ENCODE measurements at regions of chr3 and their contacts with region 1.

Region 1: DNA sequence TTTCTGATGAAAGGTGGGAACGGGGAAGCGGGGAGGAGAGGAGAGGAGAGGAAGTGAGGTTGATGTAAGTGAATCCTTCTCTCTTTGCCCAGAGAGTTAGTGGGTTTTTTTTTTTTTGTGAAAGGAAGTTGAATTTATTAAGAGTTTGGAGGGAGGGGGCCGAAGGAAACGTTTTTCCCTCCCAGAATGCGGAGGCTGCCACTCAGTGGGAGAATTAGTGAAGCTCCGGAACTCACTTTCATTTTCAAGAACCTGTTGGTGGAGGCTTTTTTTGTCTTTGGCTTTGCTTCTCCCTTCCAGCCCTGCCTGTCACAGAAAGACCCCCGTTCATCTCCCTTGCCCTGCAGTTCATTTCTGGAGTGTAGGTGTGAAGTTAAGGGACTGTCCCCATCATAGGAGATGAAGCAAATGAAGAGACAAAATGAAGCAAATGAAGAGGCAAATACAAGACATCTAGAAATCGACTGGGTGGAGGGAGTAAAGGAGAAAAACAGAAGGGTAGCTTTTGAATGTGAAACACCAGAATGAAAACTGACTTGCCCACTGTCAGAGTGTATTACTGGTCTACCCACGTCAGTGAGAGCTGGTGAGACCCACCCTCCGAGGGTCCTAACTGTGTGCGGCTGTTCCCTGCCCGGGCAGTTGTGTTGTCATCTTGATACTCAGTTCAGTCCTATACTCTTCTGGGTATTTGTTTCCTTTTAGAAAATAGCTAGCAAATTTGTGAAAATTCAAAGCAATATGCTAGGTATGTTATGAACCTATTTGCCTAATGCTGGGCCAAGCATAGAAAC is 91.5 kb downstream of the ITPR1 start:
- DNase-seq: no peak
- H3K4me3 ChIP-seq: peak overlapping the region in 53 of 59 donors; percentile 3 to 61 (median 36)
- H3K27ac ChIP-seq: peak overlapping the region in 49 of 59 donors; percentile 8 to 87 (median 69)
- H3K27me3 ChIP-seq: no peaks in the 10 kb centered on the region
- CTCF ChIP-seq: peak in 22 of 56 donors; percentile 6 to 44 (median 26)

Region 2: DNA sequence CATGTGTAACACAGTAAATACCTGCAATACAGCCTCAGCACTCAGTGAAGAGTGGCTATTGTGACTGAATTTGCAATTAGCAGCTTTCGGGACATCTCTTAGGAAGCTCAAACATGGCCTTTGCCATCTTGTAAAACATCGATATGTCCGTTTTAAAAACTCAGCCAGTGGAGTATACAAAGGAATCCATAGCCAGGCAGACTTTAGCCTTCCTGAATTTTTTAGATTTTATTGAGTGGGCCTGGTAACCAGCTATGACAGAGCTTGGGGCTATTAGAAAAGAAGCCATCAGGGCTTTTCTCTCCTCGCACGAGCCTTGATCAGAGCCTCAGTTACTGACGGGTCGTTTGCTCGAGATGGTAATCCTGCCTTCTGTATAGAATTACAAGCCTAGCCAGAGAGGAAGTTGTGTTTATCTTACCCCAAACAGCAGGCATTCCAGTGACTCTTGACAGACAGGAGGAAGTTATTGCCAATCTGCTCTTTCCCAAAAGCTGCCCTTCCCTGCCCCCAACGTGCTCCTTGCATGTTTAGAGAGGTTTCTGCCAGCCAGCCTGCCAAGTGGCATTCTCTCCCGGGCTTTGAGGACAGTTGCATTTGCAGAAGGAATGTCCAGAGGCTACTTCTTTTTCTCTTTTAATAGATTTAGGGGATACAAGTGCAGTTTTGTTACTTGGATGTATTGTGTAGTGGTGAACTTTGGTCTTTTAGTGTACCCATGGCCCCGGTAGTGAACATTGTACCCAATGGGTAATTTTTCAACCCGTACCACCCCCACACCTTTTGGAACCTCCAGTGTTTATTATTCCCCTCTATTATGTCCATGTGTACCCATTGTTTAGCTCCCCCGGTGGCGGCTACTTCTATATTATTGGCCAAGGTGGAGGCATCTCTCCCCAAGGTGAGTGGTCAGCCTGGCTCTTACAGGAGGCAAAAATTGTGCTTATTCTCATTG is 50.9 kb before region 1 on chr3:
- intact Hi-C with region 1: loop called in 1 of 2 experiments (anchors 5 kb)
- DNase-seq: peak in 1 of 10 donors; percentile 6
- H3K4me3 ChIP-seq: peak overlapping the region in 5 of 59 donors; percentile 2 to 14 (median 11)
- H3K27ac ChIP-seq: peak overlapping the region in 46 of 59 donors; percentile 0 to 80 (median 52)
- H3K27me3 ChIP-seq: no peaks in the 10 kb centered on the region
- CTCF ChIP-seq: no peak

Measured in dorsolateral prefrontal cortex (tissue), 120 donors.